ENCODE measurements at regions of chr13 and their contacts with region 1.

Region 1: GRCh38 chr13:108322206-108322824 is 52.8 kb downstream of the TNFSF13B start:
- DNase-seq: no peak
- H3K4me3 Mint-ChIP-seq: no peak overlapping the region
- H3K27ac Mint-ChIP-seq: no peak overlapping the region
- H3K4me1 Mint-ChIP-seq: peaks cover 21% of the 10 kb centered on the region
- H3K27me3 Mint-ChIP-seq: no peaks in the 10 kb centered on the region

Region 2: GRCh38 chr13:107993239-107993872 is 329.0 kb before region 1 on chr13:
- CTCF ChIA-PET with region 1: no interaction called
- intact Hi-C with region 1: no loop called
- DNase-seq: no peak
- H3K4me3 Mint-ChIP-seq: no peak overlapping the region
- H3K27ac Mint-ChIP-seq: no peak overlapping the region
- H3K4me1 Mint-ChIP-seq: no peaks in the 10 kb centered on the region
- H3K27me3 Mint-ChIP-seq: no peaks in the 10 kb centered on the region

Region 3: GRCh38 chr13:108227651-108228272 is 94.6 kb before region 1 on chr13:
- CTCF ChIA-PET with region 1: no interaction called
- intact Hi-C with region 1: loop called (anchors 1 kb)
- DNase-seq: peak; percentile 45
- H3K4me3 Mint-ChIP-seq: no peak overlapping the region
- H3K27ac Mint-ChIP-seq: no peak overlapping the region
- H3K4me1 Mint-ChIP-seq: peaks cover 49% of the 10 kb centered on the region
- H3K27me3 Mint-ChIP-seq: no peaks in the 10 kb centered on the region

Region 4: GRCh38 chr13:108342369-108343289 is 20.3 kb after region 1 on chr13:
- CTCF ChIA-PET with region 1: interaction called, 3 read pairs
- intact Hi-C with region 1: loop called (anchors 1 kb)
- DNase-seq: peak; percentile 28
- H3K4me3 Mint-ChIP-seq: peak overlapping the region; percentile 4
- H3K27ac Mint-ChIP-seq: peak overlapping the region; percentile 56
- H3K4me1 Mint-ChIP-seq: peaks cover 24% of the 10 kb centered on the region
- H3K27me3 Mint-ChIP-seq: no peaks in the 10 kb centered on the region

Region 5: GRCh38 chr13:108407495-108407894 is 85.2 kb after region 1 on chr13:
- CTCF ChIA-PET with region 1: no interaction called
- intact Hi-C with region 1: loop called (anchors 5 kb)
- DNase-seq: no peak
- H3K4me3 Mint-ChIP-seq: no peak overlapping the region
- H3K27ac Mint-ChIP-seq: no peak overlapping the region
- H3K4me1 Mint-ChIP-seq: peaks cover 45% of the 10 kb centered on the region
- H3K27me3 Mint-ChIP-seq: no peaks in the 10 kb centered on the region

Region 6: GRCh38 chr13:108508263-108508662 is 185.9 kb after region 1 on chr13:
- CTCF ChIA-PET with region 1: interaction called, 6 read pairs
- intact Hi-C with region 1: loop called (anchors 5 kb)
- DNase-seq: no peak
- H3K4me3 Mint-ChIP-seq: no peak overlapping the region
- H3K27ac Mint-ChIP-seq: no peak overlapping the region
- H3K4me1 Mint-ChIP-seq: peaks cover 3% of the 10 kb centered on the region
- H3K27me3 Mint-ChIP-seq: no peaks in the 10 kb centered on the region

Region 7: DNA sequence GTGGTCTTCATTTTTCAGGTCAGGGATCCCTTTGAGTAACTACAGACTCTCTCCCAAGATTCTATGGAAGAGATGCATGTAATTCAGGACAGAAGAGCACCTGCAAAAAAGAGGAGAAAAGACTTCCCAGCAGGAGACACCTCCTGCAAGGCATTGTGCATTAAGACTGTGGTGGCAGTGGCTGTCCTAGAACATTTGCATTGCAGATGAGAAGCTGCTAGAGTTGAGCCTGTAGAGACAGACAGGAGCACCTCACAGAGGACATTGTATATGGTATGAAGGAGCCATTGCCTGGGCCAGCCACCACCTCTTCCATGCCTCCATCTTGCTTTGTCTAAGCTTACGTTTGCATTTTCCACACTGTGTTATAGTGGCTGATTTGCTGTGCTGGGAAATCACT is 295.9 kb after region 1 on chr13:
- CTCF ChIA-PET with region 1: no interaction called
- intact Hi-C with region 1: loop called (anchors 5 kb)
- DNase-seq: no peak
- H3K4me3 Mint-ChIP-seq: no peak overlapping the region
- H3K27ac Mint-ChIP-seq: no peak overlapping the region
- H3K4me1 Mint-ChIP-seq: no peaks in the 10 kb centered on the region
- H3K27me3 Mint-ChIP-seq: peaks cover under 1% of the 10 kb centered on the region

Region 8: GRCh38 chr13:110116072-110116487 is 1793.8 kb after region 1 on chr13:
- CTCF ChIA-PET with region 1: no interaction called
- intact Hi-C with region 1: loop called (anchors 10 kb)
- DNase-seq: peak; percentile 67
- H3K4me3 Mint-ChIP-seq: no peak overlapping the region
- H3K27ac Mint-ChIP-seq: no peak overlapping the region
- H3K4me1 Mint-ChIP-seq: peaks cover 2% of the 10 kb centered on the region
- H3K27me3 Mint-ChIP-seq: peaks cover 32% of the 10 kb centered on the region